ENCODE measurements at regions of chr7 and their contacts with region 1.

Region 1: DNA sequence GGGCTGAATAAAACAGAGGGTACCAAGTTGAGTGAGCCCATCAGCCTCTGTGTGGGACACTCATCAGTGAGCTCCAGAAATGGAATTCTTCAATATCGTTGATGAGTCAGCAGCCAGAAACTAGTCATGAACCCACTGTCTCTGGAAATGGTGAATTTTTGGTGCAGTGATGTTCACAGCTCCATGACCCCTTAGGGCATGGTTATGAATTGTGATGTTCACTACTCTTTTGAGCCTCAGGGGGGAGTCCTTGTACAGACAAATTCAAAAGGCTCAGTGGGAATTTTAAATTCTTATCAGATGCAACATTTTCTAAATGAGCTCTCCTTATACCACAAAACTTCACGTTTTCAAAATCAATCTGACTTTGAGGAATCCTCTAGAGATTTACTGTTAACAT is 335.7 kb downstream of the PHTF2 start:
- DNase-seq: peak; percentile 41 to 67 (median 56)
- ATAC-seq: peak; percentile 89
- H3K4me3 ChIP-seq: no peak overlapping the region
- H3K27ac ChIP-seq: no peak overlapping the region
- H3K4me1 ChIP-seq: no peaks in the 10 kb centered on the region
- H3K27me3 ChIP-seq: peaks cover 2 to 12% of the 10 kb centered on the region in 2 experiments; a peak in 3 of 5 replicates
- CTCF ChIP-seq: peak; percentile 56 to 69 (median 56)
- EP300 ChIP-seq: no peak
- POLR2A ChIP-seq: no peak
- RAD21 ChIP-seq: peak; percentile 65 to 78

Region 2: GRCh38 chr7:78226059-78226719 is 91.9 kb after region 1 on chr7:
- CTCF ChIA-PET with region 1: no interaction called
- POLR2A ChIA-PET with region 1: no interaction called
- in situ Hi-C with region 1: no loop called
- intact Hi-C with region 1: loop called (anchors 1 kb)
- DNase-seq: peak; percentile 48 to 68 (median 64)
- ATAC-seq: peak; percentile 91
- H3K4me3 ChIP-seq: no peak overlapping the region
- H3K27ac ChIP-seq: no peak overlapping the region
- H3K4me1 ChIP-seq: no peaks in the 10 kb centered on the region
- H3K27me3 ChIP-seq: no peaks in the 10 kb centered on the region
- CTCF ChIP-seq: peak; percentile 55 to 66 (median 55)
- EP300 ChIP-seq: no peak
- POLR2A ChIP-seq: no peak
- RAD21 ChIP-seq: peak; percentile 54 to 55; a peak in 3 of 4 replicates

Region 3: GRCh38 chr7:80018941-80019752 is 1884.9 kb after region 1 on chr7:
- CTCF ChIA-PET with region 1: interaction called, 3 read pairs
- POLR2A ChIA-PET with region 1: no interaction called
- in situ Hi-C with region 1: no loop called
- intact Hi-C with region 1: loop called (anchors 10 kb)
- DNase-seq: peak; percentile 62 to 69 (median 66)
- ATAC-seq: peak; percentile 86
- H3K4me3 ChIP-seq: no peak overlapping the region
- H3K27ac ChIP-seq: no peak overlapping the region
- H3K4me1 ChIP-seq: no peaks in the 10 kb centered on the region
- H3K27me3 ChIP-seq: no peaks in the 10 kb centered on the region
- CTCF ChIP-seq: peak; percentile 55 to 83 (median 69)
- EP300 ChIP-seq: no peak
- POLR2A ChIP-seq: no peak
- RAD21 ChIP-seq: peak; percentile 34 to 62; a peak in 3 of 4 replicates